ENCODE measurements at regions of chr1 and their contacts with region 1.

Region 1: GRCh38 chr1:30779294-30780071 is 21.9 kb upstream of the LAPTM5 start:
- DNase-seq: peak; percentile 91
- H3K4me3 ChIP-seq: no peak overlapping the region
- H3K27ac ChIP-seq: no peak overlapping the region
- H3K4me1 ChIP-seq: peaks cover 0 to 7% (median 0%) of the 10 kb centered on the region in 4 donors
- H3K27me3 ChIP-seq: no peaks in the 10 kb centered on the region
- CTCF ChIP-seq: peak; percentile 89 to 99 (median 96)
- EP300 ChIP-seq: no peak
- POLR2A ChIP-seq: no peak

Region 2: DNA sequence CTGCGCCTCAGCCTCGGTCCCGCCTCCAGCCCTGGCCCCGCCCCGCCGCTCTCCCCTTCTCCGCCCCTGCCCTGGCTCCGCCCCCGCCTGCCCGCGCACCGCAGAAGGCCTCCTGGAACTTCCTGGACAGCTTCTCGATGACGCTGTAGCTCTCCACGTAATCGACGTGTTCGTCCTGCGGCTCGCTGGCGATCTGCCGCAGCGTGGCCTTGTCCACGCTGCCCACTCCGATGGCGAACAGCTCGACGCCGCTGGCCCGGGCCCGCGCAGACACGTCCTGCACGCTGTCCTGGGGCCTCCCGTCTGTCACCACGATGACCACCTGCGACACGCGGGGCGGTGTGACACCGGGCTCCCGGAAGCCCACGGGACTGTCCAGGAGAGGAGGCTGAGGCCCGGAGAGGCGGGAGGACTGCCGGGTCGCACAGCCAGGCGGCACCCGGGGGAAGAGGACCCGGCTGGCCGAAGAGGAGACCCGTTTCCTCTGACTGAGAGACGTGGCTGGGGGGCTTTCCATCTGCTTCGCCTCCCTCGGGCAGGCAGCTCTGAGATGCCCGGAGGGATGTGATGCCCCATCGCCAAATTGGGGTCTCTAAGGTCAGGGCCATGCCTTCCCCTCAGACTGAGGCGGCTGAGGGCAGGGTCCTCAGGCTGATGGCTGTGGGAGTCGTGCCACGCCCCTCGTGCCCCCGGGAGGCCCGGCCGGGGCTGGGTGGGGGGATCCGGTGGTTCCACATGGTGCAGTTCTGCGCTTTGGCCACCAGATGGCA is 60.7 kb before region 1 on chr1:
- intact Hi-C with region 1: loop called (anchors 1 kb)
- DNase-seq: peak; percentile 99
- H3K4me3 ChIP-seq: peak overlapping the region; percentile 29 to 63 (median 50)
- H3K27ac ChIP-seq: peak overlapping the region; percentile 98 to 99 (median 99)
- H3K4me1 ChIP-seq: peaks cover 0 to 14% (median 9%) of the 10 kb centered on the region in 4 donors
- H3K27me3 ChIP-seq: no peaks in the 10 kb centered on the region
- CTCF ChIP-seq: peak; percentile 99 to 100 (median 99)
- EP300 ChIP-seq: peak in 1 of 4 donors; percentile 40
- POLR2A ChIP-seq: peak; percentile 74 to 86

Region 3: GRCh38 chr1:31318146-31318545 is 538.7 kb after region 1 on chr1:
- intact Hi-C with region 1: no loop called
- DNase-seq: no peak
- H3K4me3 ChIP-seq: no peak overlapping the region
- H3K27ac ChIP-seq: no peak overlapping the region
- H3K4me1 ChIP-seq: no peaks in the 10 kb centered on the region
- H3K27me3 ChIP-seq: no peaks in the 10 kb centered on the region
- CTCF ChIP-seq: no peak
- EP300 ChIP-seq: no peak
- POLR2A ChIP-seq: no peak

Measured in sigmoid colon (tissue), 7 donors.